HEK293T (cell line): ENCODE measurements at regions of chr7 and their contacts with region 1.

Region 1: GRCh38 chr7:116591202-116592040 is 66.6 kb downstream of the CAV1 start:
- DNase-seq: no peak

Region 2: DNA sequence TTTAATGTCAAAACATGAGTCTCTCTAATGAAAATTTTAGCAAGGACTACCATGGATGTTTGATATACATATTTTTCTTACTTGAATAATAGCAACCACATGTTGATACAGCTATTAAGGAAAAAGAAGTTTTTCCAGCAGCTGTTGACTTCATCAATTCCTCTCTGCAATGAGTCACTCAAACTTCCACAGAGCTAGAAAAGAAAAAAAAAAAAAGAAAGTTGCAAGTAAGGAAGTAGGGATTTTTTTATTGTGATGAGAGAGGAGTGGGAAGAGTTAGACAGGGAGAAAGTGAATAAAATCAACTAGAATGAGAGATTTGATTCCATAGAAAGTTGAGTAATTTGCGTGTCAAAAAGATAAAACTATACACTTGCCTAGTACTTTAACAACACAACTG is 20.4 kb before region 1 on chr7:
- CTCF ChIA-PET with region 1: no interaction called
- POLR2A ChIA-PET with region 1: no interaction called
- DNase-seq: no peak

Region 3: DNA sequence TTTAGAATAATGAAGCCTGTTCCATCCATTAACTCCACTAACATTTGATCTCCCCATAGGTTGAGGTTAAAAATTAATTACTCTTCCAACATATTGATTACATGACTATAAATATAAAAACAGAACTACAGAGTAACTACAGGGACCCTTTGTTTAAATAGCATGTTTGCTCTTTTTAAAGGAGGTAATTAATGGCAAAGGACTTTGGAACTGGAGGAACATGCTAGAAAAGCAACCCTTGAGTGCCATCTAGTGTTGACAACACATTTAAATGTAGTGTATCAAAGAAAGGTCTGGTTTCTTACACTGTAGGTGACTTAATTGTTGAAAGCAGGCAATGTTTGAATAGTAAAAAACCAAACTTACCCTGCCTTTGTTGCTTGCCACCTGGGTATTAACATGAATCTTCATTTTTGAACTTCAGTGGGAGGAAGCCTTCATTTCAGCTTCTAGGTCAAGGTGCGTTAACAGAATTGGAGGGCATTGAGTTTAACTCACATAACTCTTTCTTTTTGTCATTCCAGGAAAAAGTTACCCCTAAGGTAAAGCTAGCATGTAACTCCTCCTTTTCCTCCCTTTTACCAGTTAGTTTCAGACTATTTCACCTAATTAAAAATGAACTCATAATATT is 218.3 kb after region 1 on chr7:
- CTCF ChIA-PET with region 1: interaction called, 18 read pairs
- POLR2A ChIA-PET with region 1: no interaction called
- DNase-seq: peak; percentile 36